SK-N-SH (cell line): ENCODE measurements at regions of chr20 and their contacts with region 1.

Region 1: DNA sequence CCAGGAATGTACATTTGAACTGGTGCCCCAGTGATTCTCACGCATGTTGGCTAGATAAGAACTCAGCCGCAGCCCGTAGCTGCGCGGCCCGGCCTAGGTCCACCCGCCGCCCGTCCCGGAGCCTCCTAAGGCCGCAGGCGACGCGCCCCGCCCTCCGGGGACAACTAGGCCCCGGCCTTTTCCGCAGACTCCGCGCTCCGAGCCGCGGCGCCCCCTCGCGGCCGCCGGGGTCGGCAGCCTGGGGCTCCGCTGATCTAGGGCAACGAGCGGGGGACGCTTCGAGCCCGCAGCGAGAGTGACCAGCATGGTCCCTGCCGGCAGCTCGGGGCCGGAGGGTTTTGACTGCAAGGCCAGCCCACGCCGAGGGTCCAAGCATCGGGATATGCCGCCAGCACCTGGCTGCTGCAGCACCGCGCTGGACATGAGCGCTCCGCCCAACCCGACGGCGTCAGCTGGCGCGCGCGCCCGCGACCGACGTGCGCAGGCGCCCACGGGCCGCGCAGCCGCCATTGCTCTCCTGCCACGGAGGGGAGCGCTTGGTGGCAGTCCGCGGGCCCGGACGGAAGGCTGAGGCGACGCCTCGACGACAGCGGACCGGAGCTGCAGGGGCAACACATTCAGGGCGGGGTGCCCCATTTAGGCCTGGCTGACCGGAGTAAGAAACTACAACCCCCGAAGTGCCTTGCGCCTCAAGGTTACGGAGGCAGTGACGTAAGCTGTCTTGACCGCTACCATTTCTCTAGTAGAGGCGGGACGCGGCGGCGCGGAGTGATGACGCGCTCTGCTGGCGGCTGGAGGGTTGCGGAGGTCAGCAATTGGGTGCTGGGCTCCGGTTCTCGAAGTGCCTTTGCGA is at the start of gene AP5S1:
- DNase-seq: peak; percentile 93
- H3K4me3 ChIP-seq: peak within 1 kb of the TSS; percentile 80 to 84
- H3K27ac ChIP-seq: peak within 1 kb of the TSS; percentile 92 to 97
- H3K4me1 ChIP-seq: peaks cover 11 to 23% of the 10 kb centered on the region in 2 experiments; a peak in 2 of 4 replicates
- H3K27me3 ChIP-seq: no peaks in the 10 kb centered on the region
- CTCF ChIP-seq: peak; percentile 98
- EP300 ChIP-seq: 0 out of 4 replicates have a peak, but pooled peaks of 1 of the 2 experiments have one; percentile 3
- RAD21 ChIP-seq: peak; percentile 64
- polyA plus RNA-seq, gene AP5S1: 8.6 and 10.3 TPM in 2 replicates

Region 2: DNA sequence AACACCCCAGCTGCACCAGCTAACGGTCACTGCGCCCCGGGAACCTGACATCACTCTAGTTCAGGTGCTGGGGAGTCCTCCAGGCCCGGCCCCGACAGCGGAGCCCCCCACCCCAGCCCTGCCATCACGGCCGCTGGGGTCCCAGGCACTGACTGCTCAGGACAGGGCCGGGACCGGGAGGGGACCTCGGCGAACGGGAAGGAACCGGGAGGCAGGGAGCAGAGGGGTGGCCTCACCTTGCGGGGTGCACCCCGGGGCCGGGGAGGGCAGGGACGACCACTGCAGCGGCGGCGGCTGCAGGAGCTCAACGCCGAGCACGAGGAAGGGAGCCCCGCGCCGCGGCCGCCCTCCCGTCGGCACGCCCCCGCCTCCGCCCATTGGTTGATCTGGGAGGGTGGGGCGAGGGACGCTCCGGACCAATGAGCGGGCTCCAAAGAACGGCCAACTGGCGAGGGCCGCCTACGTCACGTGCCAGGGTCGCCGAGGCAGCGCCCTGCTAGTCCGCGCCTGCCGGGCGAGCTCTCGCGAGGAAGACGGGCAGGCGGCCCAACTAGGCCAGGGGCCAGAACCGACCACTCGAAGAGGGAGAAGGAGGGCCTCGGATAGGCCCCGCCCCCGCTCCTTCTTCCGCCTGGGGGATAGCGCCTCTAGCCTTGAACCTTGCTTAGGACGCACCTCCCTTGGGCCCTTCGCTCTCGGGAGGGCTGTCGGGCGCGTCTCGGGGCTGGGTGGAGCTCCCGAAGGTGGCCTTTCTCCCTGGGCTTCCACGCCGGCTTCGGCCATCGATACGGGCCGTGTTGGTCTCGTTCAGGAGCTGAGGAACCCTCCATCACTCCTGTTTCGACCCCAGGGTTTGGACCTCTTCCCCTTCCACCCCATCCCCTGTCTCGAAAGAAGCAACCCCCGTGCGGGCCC is 52.6 kb before region 1 on chr20 and contains the start of gene ADISSP:
- CTCF ChIA-PET with region 1: interaction called, 17 read pairs
- POLR2A ChIA-PET with region 1: interaction called, 6 read pairs
- DNase-seq: peak; percentile 99
- H3K4me3 ChIP-seq: peak within 1 kb of the TSS; percentile 83 to 93
- H3K27ac ChIP-seq: peak within 1 kb of the TSS; percentile 94 to 95
- H3K4me1 ChIP-seq: peaks cover 9 to 22% of the 10 kb centered on the region in 2 experiments; a peak in 3 of 4 replicates
- H3K27me3 ChIP-seq: no peaks in the 10 kb centered on the region
- CTCF ChIP-seq: peak; percentile 28
- EP300 ChIP-seq: no peak
- RAD21 ChIP-seq: no peak
- polyA plus RNA-seq, gene ADISSP: 59.9 and 73.9 TPM in 2 replicates

Region 3: GRCh38 chr20:3781153-3781910 is 38.9 kb before region 1 on chr20 and contains the start of gene SPEF1:
- CTCF ChIA-PET with region 1: interaction called, 161 read pairs
- POLR2A ChIA-PET with region 1: interaction called, 20 read pairs
- DNase-seq: peak; percentile 95
- H3K4me3 ChIP-seq: peak within 1 kb of the TSS; percentile 51 to 68
- H3K27ac ChIP-seq: peak within 1 kb of the TSS in 1 of 2 experiments; percentile 28; a peak in 2 of 4 replicates
- H3K4me1 ChIP-seq: peaks cover 20 to 38% of the 10 kb centered on the region in 2 experiments; a peak in 3 of 4 replicates
- H3K27me3 ChIP-seq: no peaks in the 10 kb centered on the region
- CTCF ChIP-seq: peak; percentile 68
- EP300 ChIP-seq: no peak
- RAD21 ChIP-seq: peak; percentile 60
- polyA plus RNA-seq, gene SPEF1: 1.6 and 1.8 TPM in 2 replicates

Region 4: DNA sequence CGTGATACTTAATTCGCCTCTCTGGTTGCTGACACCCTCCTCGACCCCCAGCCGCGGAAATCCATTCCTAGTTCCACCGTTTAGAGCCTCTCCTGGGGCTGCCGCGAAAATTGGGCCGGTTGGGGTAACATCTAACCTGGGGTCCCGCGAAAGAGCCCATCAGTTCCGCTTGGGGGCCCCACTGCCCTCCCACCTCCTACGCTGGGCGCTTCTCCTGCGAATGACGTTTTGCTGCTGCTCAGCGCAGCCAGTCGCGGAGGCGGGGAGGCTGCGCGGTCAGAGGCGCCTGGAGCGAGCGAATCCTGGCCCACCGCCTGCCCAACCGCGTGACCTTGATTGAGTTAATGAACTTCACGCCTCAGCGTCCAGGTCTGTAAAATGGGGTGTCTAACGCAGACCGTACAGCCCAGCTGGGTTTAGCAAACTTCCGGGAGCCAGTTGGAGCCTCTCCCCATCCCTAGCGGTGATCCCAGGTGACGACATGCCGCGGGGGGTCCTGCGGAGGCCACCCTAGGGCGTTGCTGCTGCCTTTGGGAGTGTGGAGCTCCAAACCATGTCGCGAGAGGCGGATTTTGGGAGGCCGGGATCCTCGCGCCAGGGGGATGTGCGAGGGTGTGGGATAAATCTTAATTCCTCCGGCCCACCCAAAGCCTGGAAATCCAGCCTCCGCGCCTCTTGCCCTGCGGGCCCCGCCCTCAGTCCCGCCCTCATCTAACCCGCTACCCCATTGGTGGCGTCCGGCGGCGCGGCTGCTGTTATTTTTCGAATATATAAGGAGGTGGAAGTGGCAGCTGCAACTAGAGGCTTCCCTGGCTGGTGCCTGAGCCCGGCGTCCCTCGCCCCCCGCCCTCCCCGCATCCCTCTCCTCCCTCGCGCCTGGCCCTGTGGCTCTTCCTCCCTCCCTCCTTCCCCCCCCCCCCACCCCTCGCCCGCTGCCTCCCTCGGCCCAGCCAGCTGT is 24.5 kb before region 1 on chr20 and contains the start of gene CDC25B:
- CTCF ChIA-PET with region 1: interaction called, 51 read pairs
- POLR2A ChIA-PET with region 1: interaction called, 10 read pairs
- DNase-seq: peak; percentile 96
- H3K4me3 ChIP-seq: peak within 1 kb of the TSS; percentile 72 to 80
- H3K27ac ChIP-seq: peak within 1 kb of the TSS; percentile 91 to 96
- H3K4me1 ChIP-seq: peaks cover 17 to 41% of the 10 kb centered on the region in 2 experiments; a peak in 3 of 4 replicates
- H3K27me3 ChIP-seq: no peaks in the 10 kb centered on the region
- CTCF ChIP-seq: peak; percentile 50
- EP300 ChIP-seq: no peak
- RAD21 ChIP-seq: peak; percentile 43
- polyA plus RNA-seq, gene CDC25B: 41.5 and 56.5 TPM in 2 replicates

Region 5: DNA sequence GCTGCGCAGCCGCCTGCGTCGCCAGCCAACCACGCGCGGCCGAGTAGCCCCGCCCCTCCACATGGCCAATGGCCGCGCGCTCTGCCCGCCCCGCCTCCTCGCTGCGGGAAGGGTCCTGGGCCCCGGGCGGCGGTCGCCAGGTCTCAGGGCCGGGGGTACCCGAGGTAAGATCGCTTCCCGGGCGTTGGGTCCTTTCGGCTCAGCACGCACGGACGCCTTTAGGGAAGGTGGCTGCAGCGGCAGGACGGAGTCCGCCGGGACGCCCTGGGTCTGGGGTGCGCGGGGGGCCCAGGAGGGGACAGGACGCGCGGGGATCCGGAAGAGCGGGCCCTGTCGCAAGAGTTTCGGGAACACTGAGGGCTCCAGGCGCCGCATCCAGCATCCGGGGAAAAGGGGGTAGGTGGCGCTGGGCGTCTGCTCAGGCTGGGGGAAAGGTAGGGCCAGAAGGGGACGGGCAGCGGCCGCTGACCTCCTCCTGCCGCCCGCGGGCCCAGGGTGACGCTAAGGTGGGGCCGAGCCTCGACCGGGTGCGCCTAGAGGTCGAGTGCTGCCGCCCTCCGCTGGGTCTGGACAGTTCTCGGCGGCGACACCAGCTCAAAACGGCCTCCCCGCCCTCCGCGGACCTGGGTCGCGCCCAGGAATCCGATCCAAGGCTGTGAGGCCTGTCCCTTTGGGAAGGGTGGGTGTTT is 26.6 kb after region 1 on chr20 and contains the start of gene MAVS:
- CTCF ChIA-PET with region 1: interaction called, 33 read pairs
- POLR2A ChIA-PET with region 1: interaction called, 4 read pairs
- DNase-seq: peak; percentile 98
- H3K4me3 ChIP-seq: peak within 1 kb of the TSS; percentile 76 to 87
- H3K27ac ChIP-seq: peak within 1 kb of the TSS; percentile 68 to 83; a peak in 3 of 4 replicates
- H3K4me1 ChIP-seq: peaks cover 0 to 5% of the 10 kb centered on the region in 2 experiments; a peak in 1 of 4 replicates
- H3K27me3 ChIP-seq: no peaks in the 10 kb centered on the region
- CTCF ChIP-seq: no peak
- EP300 ChIP-seq: 0 out of 4 replicates have a peak, but pooled peaks of 1 of the 2 experiments have one; percentile 2
- RAD21 ChIP-seq: no peak
- polyA plus RNA-seq, gene MAVS: 9.1 and 10.5 TPM in 2 replicates

Region 6: GRCh38 chr20:3854462-3854871 is 34.2 kb after region 1 on chr20:
- CTCF ChIA-PET with region 1: interaction called, 33 read pairs
- POLR2A ChIA-PET with region 1: no interaction called
- DNase-seq: no peak
- H3K4me3 ChIP-seq: no peak overlapping the region
- H3K27ac ChIP-seq: no peak overlapping the region
- H3K4me1 ChIP-seq: no peaks in the 10 kb centered on the region
- H3K27me3 ChIP-seq: no peaks in the 10 kb centered on the region
- CTCF ChIP-seq: no peak
- EP300 ChIP-seq: no peak
- RAD21 ChIP-seq: no peak